Activated CD4-positive, alpha-beta T cell treated with anti-CD3 and anti-CD28 coated beads, Interleukin-2, amount 10 ng/mL, durations not matched to agents 24 days and 14 days (primary cell): ENCODE measurements at regions of chr1 and their contacts with region 1.

Region 1: DNA sequence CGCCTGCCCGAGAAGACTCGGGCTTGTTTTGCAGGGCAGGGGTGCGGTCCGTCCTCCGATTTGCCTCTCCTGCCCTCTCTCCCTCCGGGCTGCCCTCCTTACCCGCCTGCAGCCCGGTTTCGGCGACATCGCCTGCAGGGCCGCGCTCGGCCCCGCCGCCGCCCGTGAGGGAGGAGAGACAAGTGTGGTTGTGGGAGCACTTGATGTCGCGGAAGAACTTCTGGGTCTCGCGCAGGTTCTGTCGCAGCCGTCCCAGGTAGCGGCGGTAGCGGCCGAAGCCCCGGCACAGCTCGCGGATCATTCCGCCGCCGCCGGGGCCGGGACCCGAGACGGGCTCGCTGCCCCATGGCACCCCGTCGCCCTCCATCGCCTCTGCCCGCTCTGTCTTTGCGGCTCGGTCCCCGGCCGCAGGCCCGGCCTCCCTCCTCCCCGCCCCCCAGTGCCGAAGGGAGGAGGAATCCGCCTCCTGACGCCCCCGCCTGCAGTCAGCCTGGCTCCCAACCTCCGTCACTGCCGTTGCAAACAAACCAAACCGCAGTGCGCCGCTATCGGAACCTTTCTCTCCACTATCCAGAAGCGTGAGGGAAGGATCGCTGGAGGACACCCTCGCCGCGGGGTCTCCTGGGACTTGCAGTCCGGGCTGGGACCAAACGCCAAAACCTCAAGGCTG is at the start of gene DSTYK:
- DNase-seq: peak; percentile 97
- H3K4me3 Mint-ChIP-seq: peak within 1 kb of the TSS; percentile 95
- H3K27ac Mint-ChIP-seq: peak within 1 kb of the TSS; percentile 96
- H3K4me1 Mint-ChIP-seq: peaks cover 42% of the 10 kb centered on the region
- H3K27me3 Mint-ChIP-seq: no peaks in the 10 kb centered on the region
- total RNA-seq, gene DSTYK: 26.7 and 27.6 TPM in 2 replicates

Region 2: GRCh38 chr1:205121660-205122488 is 89.4 kb before region 1 on chr1 and contains the start of gene RBBP5:
- intact Hi-C with region 1: loop called (anchors 2 kb)
- DNase-seq: peak; percentile 98
- H3K4me3 Mint-ChIP-seq: peak within 1 kb of the TSS; percentile 98
- H3K27ac Mint-ChIP-seq: peak within 1 kb of the TSS; percentile 98
- H3K4me1 Mint-ChIP-seq: peaks cover 34% of the 10 kb centered on the region
- H3K27me3 Mint-ChIP-seq: no peaks in the 10 kb centered on the region
- total RNA-seq, gene RBBP5: 24.0 and 27.2 TPM in 2 replicates

Region 3: DNA sequence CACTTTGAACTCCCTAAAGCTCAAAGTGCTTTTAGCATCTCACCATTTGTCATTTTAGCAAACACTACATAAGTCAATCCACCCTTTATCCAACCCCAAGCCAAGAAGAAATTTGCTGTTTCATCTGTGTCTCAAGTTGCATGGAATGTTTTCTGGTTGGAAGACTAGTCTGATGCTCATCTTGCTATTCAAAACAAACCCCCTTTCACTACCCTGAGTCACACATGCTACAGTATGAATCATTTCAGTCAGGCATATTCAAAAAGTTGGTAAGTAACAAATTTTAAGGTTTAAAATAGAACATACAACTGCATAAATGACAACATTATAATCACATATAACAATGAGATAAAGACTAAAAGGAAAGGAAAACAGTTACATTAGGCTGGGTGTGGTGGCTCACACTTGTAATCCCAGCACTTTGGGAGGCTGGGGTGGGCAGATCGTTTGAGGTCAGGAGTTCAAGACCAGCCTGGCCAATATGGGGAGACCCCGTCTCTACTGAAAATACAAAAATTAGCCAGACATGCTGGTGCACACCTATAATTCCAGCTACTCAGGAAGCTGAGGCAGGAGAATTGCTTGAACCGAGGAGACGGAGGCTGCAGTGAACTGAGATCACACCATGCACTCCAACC is 38.5 kb before region 1 on chr1:
- intact Hi-C with region 1: loop called (anchors 5 kb)
- DNase-seq: no peak
- H3K4me3 Mint-ChIP-seq: peak overlapping the region; percentile 54
- H3K27ac Mint-ChIP-seq: peak overlapping the region; percentile 79
- H3K4me1 Mint-ChIP-seq: peaks cover 17% of the 10 kb centered on the region
- H3K27me3 Mint-ChIP-seq: no peaks in the 10 kb centered on the region

Region 4: DNA sequence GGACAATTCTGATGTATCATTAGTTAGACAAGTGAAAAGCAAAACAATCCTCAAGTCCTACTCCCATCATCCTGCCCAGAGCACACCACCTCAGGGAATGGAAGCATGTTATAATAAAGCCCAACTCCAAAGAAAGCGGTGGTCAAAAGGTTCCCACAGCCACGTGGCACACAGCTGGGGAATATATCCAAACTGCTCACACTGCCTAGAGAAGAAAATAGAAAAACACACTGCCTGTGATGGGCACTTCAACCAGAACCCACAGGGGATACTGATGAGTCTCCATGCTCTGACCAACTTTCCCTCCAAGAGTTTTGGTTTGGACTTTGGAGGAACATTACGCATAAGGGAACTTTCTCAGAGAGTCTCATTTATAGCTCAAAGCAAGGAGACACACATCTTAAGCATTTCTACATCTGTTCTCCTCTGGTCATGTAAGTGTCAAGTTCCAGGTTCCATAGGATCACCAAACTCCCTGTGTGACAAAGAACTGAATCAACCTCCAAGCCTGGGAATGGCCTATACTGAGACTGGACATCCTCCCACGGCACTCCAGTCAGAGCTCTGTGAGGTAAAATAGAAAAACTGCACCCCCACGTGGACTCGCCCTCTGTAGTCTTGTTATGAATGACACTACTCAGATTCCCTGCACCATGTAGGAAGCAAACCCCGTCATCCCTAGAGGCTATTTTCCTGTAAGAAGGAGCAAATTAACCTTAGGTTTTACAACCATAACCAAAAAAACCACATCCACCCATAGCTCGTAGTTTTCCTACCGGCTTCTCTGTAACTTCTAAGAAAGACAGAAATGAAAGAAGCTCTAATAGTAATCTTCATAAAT is 12.0 kb before region 1 on chr1:
- intact Hi-C with region 1: loop called (anchors 1 kb)
- DNase-seq: peak; percentile 78
- H3K4me3 Mint-ChIP-seq: peak overlapping the region; percentile 66
- H3K27ac Mint-ChIP-seq: peak overlapping the region; percentile 85
- H3K4me1 Mint-ChIP-seq: peaks cover 50% of the 10 kb centered on the region
- H3K27me3 Mint-ChIP-seq: no peaks in the 10 kb centered on the region

Region 5: GRCh38 chr1:205407970-205408369 is 196.7 kb after region 1 on chr1:
- intact Hi-C with region 1: no loop called
- DNase-seq: no peak
- H3K4me3 Mint-ChIP-seq: no peak overlapping the region
- H3K27ac Mint-ChIP-seq: no peak overlapping the region
- H3K4me1 Mint-ChIP-seq: peaks cover 3% of the 10 kb centered on the region
- H3K27me3 Mint-ChIP-seq: peaks cover 37% of the 10 kb centered on the region